Left ventricle myocardium inferior (tissue), 1 donor: ENCODE measurements at regions of chr5 and their contacts with region 1.

Region 1: DNA sequence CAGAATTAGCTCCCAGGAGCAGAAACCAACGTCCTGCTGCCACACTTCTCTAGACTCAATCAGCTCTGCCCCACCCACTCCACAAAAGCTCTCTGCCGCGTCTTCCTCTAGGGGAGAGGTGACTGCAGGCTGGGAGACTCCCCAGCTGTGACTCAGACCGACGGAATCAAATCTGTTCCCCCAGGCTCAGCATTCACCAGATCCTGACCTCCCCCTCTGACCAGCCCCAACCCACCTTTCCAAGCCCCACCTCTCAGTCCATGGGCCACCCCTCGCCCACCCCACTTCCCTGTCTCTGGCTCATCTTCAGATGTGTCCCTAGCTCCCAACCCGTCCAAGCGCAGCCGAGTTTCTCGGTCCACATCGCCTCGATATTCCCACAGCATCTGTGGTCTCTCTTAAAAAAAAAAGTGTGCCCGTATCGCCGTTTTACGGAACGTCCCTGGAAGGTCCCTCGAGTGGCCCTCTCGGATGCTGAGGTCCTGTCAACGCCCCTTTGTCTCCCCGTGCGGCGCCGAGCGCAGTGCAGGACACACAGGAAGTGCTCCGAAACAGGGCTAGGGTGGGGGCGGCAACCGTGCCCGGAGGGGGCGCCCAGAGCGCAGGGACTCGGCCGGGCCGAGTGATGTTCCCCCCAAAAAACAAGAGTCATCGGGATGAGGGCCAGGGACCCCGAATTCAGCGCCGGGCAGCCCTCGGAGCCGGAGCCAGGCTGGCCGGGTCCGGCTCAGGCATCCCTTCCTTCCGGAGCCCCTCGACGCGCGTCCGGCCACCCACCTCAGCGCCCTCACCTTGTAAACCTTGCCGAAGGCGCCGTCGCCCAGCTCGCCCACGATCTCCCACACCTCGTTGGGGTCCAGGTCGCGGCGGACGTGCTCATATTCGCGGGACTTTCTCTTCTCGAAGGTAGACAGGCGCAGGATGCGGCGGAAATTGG is 660 bp downstream of the STK10 start:
- DNase-seq: peak; percentile 58
- H3K4me3 ChIP-seq: peak overlapping the region; percentile 88
- H3K27ac ChIP-seq: peak overlapping the region; percentile 94
- H3K4me1 ChIP-seq: peaks cover 46% of the 10 kb centered on the region
- H3K27me3 ChIP-seq: no peaks in the 10 kb centered on the region
- CTCF ChIP-seq: no peak

Region 2: GRCh38 chr5:171725205-171725601 is 462.2 kb before region 1 on chr5:
- intact Hi-C with region 1: no loop called
- DNase-seq: no peak
- H3K4me3 ChIP-seq: no peak overlapping the region
- H3K27ac ChIP-seq: no peak overlapping the region
- H3K4me1 ChIP-seq: peaks cover 7% of the 10 kb centered on the region
- H3K27me3 ChIP-seq: no peaks in the 10 kb centered on the region
- CTCF ChIP-seq: no peak

Region 3: DNA sequence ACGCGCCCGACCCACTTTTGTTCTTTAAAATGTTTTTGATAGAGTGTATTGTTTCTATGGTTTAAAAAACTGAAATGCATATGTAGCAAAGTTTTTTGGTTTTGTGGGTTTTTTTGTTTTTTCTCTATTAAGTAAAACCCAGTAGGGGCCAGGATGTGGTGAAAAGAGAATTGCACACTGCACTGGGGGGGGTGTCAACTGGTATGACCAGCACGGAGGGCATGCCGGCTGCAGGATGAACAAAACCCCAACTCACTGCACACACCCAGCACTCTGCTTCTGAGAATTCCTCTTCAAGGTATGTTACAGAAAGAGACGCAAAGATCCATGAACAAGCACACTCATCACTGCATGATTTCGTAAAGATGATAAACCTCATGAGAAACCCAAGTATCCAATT is 74.3 kb before region 1 on chr5:
- intact Hi-C with region 1: loop called (anchors 2 kb)
- DNase-seq: peak; percentile 9
- H3K4me3 ChIP-seq: no peak overlapping the region
- H3K27ac ChIP-seq: no peak overlapping the region
- H3K4me1 ChIP-seq: peaks cover 56% of the 10 kb centered on the region
- H3K27me3 ChIP-seq: no peaks in the 10 kb centered on the region
- CTCF ChIP-seq: no peak